ENCODE measurements at regions of chr1 and their contacts with region 1.

Region 1: DNA sequence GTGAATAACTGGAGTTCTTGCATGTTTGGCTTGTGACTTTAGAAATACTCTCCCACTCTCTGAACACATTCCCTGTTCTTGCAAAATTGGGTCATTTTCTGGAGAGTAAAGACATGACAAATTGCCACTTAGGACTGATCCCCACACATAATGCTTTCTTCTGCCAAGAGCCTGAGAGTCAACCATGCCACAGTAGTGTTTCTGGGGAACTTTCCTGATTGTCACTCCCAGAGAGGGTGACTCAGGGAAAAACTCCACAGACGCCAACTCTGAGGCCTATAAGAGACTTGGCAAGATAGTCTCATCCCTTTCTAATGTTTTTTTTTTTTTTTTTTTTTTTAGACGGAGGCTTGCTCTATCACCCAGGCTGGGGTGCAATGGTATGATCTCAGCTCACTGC is 157.8 kb downstream of the ATG4C start:
- DNase-seq: no peak
- H3K4me3 ChIP-seq: no peak overlapping the region
- H3K4me3 Mint-ChIP-seq: no peak overlapping the region
- H3K27ac Mint-ChIP-seq: no peak overlapping the region
- H3K4me1 ChIP-seq: no peaks in the 10 kb centered on the region
- H3K4me1 Mint-ChIP-seq: no peaks in the 10 kb centered on the region
- H3K27me3 ChIP-seq: no peaks in the 10 kb centered on the region; the same call in 1 of the 2 replicates
- H3K27me3 Mint-ChIP-seq: peaks cover 13% of the 10 kb centered on the region
- CTCF ChIP-seq: no peak

Region 2: GRCh38 chr1:64721576-64722145 is 1779.9 kb after region 1 on chr1:
- CTCF ChIA-PET with region 1: no interaction called
- POLR2A ChIA-PET with region 1: interaction called, 12 read pairs
- intact Hi-C with region 1: no loop called
- DNase-seq: no peak
- H3K4me3 ChIP-seq: no peak overlapping the region
- H3K4me3 Mint-ChIP-seq: no peak overlapping the region
- H3K27ac Mint-ChIP-seq: no peak overlapping the region
- H3K4me1 ChIP-seq: no peaks in the 10 kb centered on the region
- H3K4me1 Mint-ChIP-seq: no peaks in the 10 kb centered on the region
- H3K27me3 ChIP-seq: no peaks in the 10 kb centered on the region
- H3K27me3 Mint-ChIP-seq: peaks cover 2% of the 10 kb centered on the region
- CTCF ChIP-seq: no peak

Measured in Caco-2 (cell line).